ENCODE measurements at regions of chr5 and their contacts with region 1.

Region 1: GRCh38 chr5:32076699-32077695 is 97.1 kb downstream of the GOLPH3 start:
- DNase-seq: peak; percentile 75
- H3K4me3 ChIP-seq: no peak overlapping the region
- H3K27ac ChIP-seq: no peak overlapping the region
- H3K4me1 ChIP-seq: no peaks in the 10 kb centered on the region
- H3K27me3 ChIP-seq: no peaks in the 10 kb centered on the region
- CTCF ChIP-seq: peak; percentile 91

Region 2: GRCh38 chr5:31825518-31826068 is 251.4 kb before region 1 on chr5:
- CTCF ChIA-PET with region 1: interaction called, 16 read pairs
- POLR2A ChIA-PET with region 1: no interaction called
- intact Hi-C with region 1: loop called (anchors 1 kb)
- DNase-seq: peak; percentile 79
- H3K4me3 ChIP-seq: no peak overlapping the region
- H3K27ac ChIP-seq: no peak overlapping the region
- H3K4me1 ChIP-seq: no peaks in the 10 kb centered on the region
- H3K27me3 ChIP-seq: no peaks in the 10 kb centered on the region
- CTCF ChIP-seq: peak; percentile 83

Region 3: DNA sequence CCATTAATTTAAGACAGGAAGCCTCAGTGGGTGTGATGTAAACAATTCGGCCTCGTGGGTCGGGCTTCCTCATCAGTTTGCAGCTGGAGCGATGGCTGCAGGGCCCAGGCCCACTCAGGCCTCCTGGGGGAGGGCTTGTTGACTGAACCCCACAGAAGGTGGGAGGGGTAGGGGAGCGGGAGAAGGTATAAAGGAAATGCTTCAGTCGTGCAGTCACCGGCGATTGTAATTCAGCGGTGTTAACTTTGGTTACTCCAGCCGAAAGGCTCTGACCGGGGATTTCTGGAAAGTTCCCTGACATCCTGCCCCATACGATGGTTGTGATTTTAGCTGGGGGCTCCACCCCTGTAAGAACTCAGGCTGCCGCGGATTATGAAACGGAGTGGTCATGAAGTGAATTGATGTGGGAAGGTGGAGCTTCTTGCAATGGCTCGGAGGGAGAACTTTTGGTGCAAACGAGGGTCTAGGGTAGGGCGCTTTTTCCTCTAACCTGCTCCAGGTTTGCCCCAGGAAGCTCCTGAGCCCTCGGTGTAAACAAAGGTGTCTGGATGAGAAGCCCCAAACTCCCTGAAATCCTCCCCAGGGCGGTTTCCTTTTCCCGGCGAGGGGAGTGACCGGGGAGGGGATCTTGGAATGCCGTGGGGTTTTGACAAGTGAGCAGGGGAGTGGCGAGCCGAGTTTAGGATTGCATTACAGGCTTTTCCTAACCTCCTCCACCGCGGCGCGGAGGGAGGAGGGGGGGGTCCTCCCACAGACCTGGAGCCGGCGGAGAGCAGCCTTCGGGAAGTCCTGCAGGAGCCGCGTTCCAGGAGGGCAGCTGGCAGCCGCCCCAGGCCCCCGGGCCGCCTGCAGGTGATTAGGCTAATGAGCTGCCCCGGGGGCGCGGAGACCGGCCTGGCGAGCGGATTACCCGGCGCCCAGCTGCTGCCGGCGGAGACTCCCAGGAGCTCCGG is 222.5 kb before region 1 on chr5:
- CTCF ChIA-PET with region 1: no interaction called
- POLR2A ChIA-PET with region 1: no interaction called
- intact Hi-C with region 1: loop called (anchors 1 kb)
- DNase-seq: peak; percentile 27
- H3K4me3 ChIP-seq: peak overlapping the region; percentile 46
- H3K27ac ChIP-seq: no peak overlapping the region
- H3K4me1 ChIP-seq: peaks cover 24% of the 10 kb centered on the region
- H3K27me3 ChIP-seq: no peaks in the 10 kb centered on the region
- CTCF ChIP-seq: no peak

Region 4: GRCh38 chr5:31934156-31934555 is 142.8 kb before region 1 on chr5:
- CTCF ChIA-PET with region 1: interaction called, 9 read pairs
- POLR2A ChIA-PET with region 1: no interaction called
- intact Hi-C with region 1: loop called (anchors 1 kb)
- DNase-seq: peak; percentile 68
- H3K4me3 ChIP-seq: no peak overlapping the region
- H3K27ac ChIP-seq: no peak overlapping the region
- H3K4me1 ChIP-seq: peaks cover 19% of the 10 kb centered on the region
- H3K27me3 ChIP-seq: no peaks in the 10 kb centered on the region
- CTCF ChIP-seq: no peak

Measured in A673 (cell line).